PC-9 (cell line): ENCODE measurements at regions of chr3 and their contacts with region 1.

Region 1: DNA sequence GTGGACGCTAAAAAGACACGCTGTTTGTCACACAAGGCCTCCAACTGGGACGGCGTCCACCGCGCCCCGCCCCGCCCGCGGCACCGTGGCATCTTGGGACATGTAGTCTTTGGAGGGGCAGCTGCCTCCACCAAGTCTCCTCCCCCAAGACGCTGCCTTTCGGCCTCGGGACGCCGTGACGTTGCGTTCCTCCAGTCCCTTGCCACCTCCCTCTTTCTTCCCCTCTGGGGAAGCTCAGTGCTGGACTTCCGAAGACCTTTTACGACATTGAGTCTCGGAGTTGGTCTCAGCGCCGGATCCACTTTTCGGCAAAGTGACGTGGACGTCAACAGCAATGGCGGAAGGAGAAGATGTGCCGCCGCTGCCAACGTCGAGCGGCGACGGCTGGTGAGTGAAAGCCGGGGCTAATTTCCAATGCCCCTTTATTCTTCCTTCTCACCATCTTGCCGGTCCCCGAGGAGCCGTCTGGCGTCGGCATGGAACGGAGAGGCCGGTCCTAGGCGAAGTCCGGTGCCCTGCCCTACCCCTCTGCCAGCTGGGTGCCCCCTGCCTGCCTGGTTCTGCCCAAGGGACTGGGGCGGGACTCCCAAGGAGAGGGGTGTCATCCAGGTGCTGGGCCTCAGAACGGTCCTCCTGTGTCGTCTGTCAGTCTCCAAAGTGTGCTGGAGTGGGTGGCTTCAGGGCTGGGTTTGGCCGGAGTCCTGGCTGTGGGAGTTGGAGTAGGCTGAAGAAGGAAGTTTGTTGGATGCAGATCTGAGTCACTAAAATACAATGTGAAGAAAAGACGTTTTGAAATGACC is at the start of gene TBC1D23:
- DNase-seq: peak; percentile 100
- H3K4me3 ChIP-seq: peak within 1 kb of the TSS; percentile 78
- H3K27ac ChIP-seq: peak within 1 kb of the TSS; percentile 89
- H3K4me1 ChIP-seq: peaks cover 51% of the 10 kb centered on the region
- H3K27me3 ChIP-seq: no peaks in the 10 kb centered on the region
- CTCF ChIP-seq: 0 out of 2 replicates have a peak, but pooled peaks have one; percentile 14
- total RNA-seq, gene TBC1D23: 68.0 and 68.7 TPM in 2 replicates

Region 2: GRCh38 chr3:101724329-101725193 is 1463.7 kb after region 1 on chr3 and contains the start of gene CEP97:
- CTCF ChIA-PET with region 1: no interaction called
- POLR2A ChIA-PET with region 1: interaction called, 11 read pairs
- intact Hi-C with region 1: no loop called
- DNase-seq: peak; percentile 93 to 96
- H3K4me3 ChIP-seq: peak within 1 kb of the TSS; percentile 90
- H3K27ac ChIP-seq: peak within 1 kb of the TSS; percentile 31
- H3K4me1 ChIP-seq: peaks cover 10% of the 10 kb centered on the region
- H3K27me3 ChIP-seq: no peaks in the 10 kb centered on the region
- CTCF ChIP-seq: no peak
- total RNA-seq, gene CEP97: 13.4 and 20.6 TPM in 2 replicates